ENCODE measurements at regions of chr3 and their contacts with region 1.

Region 1: GRCh38 chr3:88346643-88347042 is 196.9 kb downstream of the C3orf38 start:
- DNase-seq: no peak
- ATAC-seq: no peak

Region 2: GRCh38 chr3:88167704-88168103 is 178.9 kb before region 1 on chr3:
- intact Hi-C with region 1: no loop called
- DNase-seq: no peak
- ATAC-seq: no peak

Region 3: DNA sequence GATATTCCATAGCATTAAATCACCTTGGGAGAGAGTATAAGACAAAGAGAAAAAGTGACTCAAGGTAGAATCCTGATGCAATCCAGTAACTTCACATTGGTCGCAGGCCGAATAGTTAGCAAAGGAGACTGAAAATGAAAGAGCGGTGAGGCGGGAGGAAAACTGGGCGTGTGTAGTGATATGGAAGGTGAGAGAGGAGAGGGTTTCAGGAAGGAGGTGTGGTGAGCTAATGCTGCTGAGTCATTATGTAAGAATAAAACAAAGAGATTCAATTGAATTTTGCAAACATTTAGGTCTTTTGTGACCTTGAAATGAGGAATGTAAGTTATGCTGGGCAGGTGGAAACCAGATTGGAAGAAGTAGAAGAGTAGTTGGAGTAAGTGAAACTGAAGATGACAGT is 38.4 kb after region 1 on chr3:
- intact Hi-C with region 1: loop called in 1 of 2 experiments (anchors 5 kb)
- DNase-seq: no peak
- ATAC-seq: no peak

Region 4: GRCh38 chr3:88440701-88441100 is 94.1 kb after region 1 on chr3:
- intact Hi-C with region 1: no loop called
- DNase-seq: no peak
- ATAC-seq: no peak

Region 5: DNA sequence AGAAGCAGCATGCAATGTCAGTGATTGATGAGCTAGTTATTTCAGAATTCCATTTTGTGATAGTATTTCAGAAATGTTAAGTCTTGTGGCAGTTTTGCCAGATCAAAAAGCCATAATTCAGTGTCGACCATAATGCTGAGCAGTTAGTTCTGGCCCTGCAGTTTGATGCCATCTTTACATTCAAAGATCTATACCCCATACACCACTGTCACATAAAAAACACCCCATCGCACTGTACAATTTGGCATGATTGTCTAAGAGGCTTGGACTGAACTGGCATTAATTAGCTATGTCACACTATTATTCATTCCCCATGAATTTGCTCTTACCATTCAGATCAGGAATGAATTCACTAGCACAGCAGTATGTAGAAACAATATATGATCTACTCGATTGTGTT is 633.1 kb after region 1 on chr3:
- intact Hi-C with region 1: no loop called
- DNase-seq: no peak
- ATAC-seq: no peak